Posterior cingulate gyrus (tissue), 11 donors: ENCODE measurements at regions of chr18 and their contacts with region 1.

Region 1: GRCh38 chr18:2547477-2548087 is 23.7 kb downstream of the METTL4 start:
- DNase-seq: no peak

Region 2: GRCh38 chr18:864872-865273 is 1682.7 kb before region 1 on chr18:
- intact Hi-C with region 1: loop called (anchors 2 kb)
- DNase-seq: peak; percentile 32 to 96 (median 74)

Region 3: GRCh38 chr18:1585879-1586488 is 961.6 kb before region 1 on chr18:
- intact Hi-C with region 1: loop called (anchors 5 kb)
- DNase-seq: no peak

Region 4: GRCh38 chr18:2337552-2338141 is 209.9 kb before region 1 on chr18:
- intact Hi-C with region 1: loop called (anchors 5 kb)
- DNase-seq: peak in 2 of 10 donors; percentile 24 to 32

Region 5: GRCh38 chr18:2627821-2628276 is 80.3 kb after region 1 on chr18:
- intact Hi-C with region 1: no loop called
- DNase-seq: no peak